Lower leg skin (tissue), 4 donors: ENCODE measurements at regions of chr9 and their contacts with region 1.

Region 1: GRCh38 chr9:109994141-109994540 is 213.8 kb downstream of the C9orf152 start:
- DNase-seq: no peak
- H3K4me3 ChIP-seq: no peak overlapping the region
- CTCF ChIP-seq: no peak
- POLR2A ChIP-seq: no peak

Region 2: DNA sequence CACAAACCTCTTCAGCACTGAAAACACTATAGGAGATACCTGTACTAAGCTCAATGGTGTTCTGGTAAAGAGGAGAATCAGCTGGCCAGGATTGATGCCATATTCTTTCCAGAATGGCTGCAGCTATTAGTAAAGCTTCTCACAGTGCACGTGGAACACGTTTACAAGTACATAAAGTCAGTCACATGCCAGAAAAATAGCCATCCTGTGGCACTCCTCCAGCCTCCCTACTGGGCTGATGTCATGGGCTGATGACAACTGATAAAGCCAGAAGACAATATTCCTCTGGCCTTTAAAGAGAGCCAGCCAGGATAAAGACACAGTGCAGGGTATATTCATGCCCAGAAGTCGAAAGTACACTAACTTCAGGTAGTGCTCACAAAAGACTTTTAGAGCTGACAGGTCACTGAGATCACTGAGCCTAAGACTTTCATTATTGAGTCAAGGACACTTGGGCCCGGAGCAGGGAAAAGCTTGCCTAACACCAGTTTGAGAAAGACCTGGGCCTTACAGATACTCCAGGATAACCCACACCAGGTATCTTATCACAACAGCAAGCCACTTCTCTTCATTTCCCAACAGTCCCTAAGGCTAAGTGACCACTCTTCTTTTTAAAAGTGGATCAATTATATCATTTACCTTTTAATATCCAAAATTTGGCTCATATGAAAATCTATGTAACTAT is 1030.5 kb before region 1 on chr9:
- intact Hi-C with region 1: no loop called
- DNase-seq: no peak
- H3K4me3 ChIP-seq: no peak overlapping the region
- CTCF ChIP-seq: no peak
- POLR2A ChIP-seq: no peak

Region 3: GRCh38 chr9:109934857-109935215 is 59.3 kb before region 1 on chr9:
- intact Hi-C with region 1: loop called (anchors 2 kb)
- DNase-seq: no peak
- H3K4me3 ChIP-seq: no peak overlapping the region
- CTCF ChIP-seq: no peak
- POLR2A ChIP-seq: no peak